Naive thymus-derived CD4-positive, alpha-beta T cell (primary cell): ENCODE measurements at regions of chr18 and their contacts with region 1.

Region 1: DNA sequence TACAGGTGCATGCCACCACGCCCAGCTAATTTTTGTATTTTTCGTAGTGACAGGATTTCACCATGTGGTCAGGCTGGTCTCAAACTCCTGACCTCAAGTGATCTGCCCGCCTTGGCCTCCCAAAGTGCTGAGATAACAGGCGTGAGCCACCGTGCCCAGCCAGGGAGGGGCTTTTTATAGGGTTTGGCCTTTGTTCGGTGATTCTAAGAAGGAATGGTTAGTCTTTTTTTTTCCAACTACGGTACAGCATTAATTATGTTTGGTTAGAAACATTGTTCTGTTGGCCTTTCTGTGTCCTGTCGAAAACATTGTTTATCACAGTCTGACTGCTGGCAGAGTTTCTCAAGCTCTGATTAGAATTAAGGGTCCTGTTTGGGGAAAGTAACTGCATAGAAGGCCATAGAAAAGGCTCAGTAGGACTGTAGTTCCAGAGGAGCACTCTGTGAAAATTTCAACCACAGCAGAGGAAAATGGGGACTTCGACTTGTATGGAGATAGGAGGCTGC is 19.3 kb upstream of the SMCHD1 start:
- DNase-seq: no peak
- ATAC-seq: peak; percentile 47
- H3K4me3 ChIP-seq: peak overlapping the region; percentile 46
- H3K4me3 Mint-ChIP-seq: peak overlapping the region in 9 of 10 donors; percentile 68 to 93 (median 86)
- H3K27ac ChIP-seq: peak overlapping the region; percentile 83
- H3K27ac Mint-ChIP-seq: peak overlapping the region in 6 of 9 donors; percentile 98 to 100 (median 100)
- H3K4me1 ChIP-seq: peaks cover 65 to 74% of the 10 kb centered on the region in 2 donors
- H3K4me1 Mint-ChIP-seq: peaks cover 0 to 100% (median 79%) of the 10 kb centered on the region in 7 donors
- H3K27me3 ChIP-seq: no peaks in the 10 kb centered on the region
- H3K27me3 Mint-ChIP-seq: no peaks in the 10 kb centered on the region

Region 2: GRCh38 chr18:2547477-2548087 is 88.6 kb before region 1 on chr18:
- CTCF ChIA-PET with region 1: interaction called, 5 read pairs
- POLR2A ChIA-PET with region 1: interaction called, 15 read pairs
- intact Hi-C with region 1: loop called in 1 of 2 experiments (anchors 1 kb)
- DNase-seq: peak in 7 of 9 donors; percentile 13 to 50 (median 37)
- ATAC-seq: peak; percentile 72
- H3K4me3 ChIP-seq: no peak overlapping the region
- H3K4me3 Mint-ChIP-seq: no peak overlapping the region
- H3K27ac ChIP-seq: no peak overlapping the region
- H3K27ac Mint-ChIP-seq: peak overlapping the region in 3 of 9 donors; percentile 0 to 10 (median 6)
- H3K4me1 ChIP-seq: no peaks in the 10 kb centered on the region
- H3K4me1 Mint-ChIP-seq: peaks cover 3 to 33% (median 23%) of the 10 kb centered on the region in 7 donors
- H3K27me3 ChIP-seq: no peaks in the 10 kb centered on the region
- H3K27me3 Mint-ChIP-seq: no peaks in the 10 kb centered on the region

Region 3: GRCh38 chr18:2589345-2590068 is 46.7 kb before region 1 on chr18:
- CTCF ChIA-PET with region 1: interaction called, 11 read pairs
- POLR2A ChIA-PET with region 1: interaction called, 74 read pairs
- intact Hi-C with region 1: loop called (anchors 1 kb)
- DNase-seq: peak in 5 of 9 donors; percentile 24 to 58 (median 49)
- ATAC-seq: peak; percentile 70
- H3K4me3 ChIP-seq: peak overlapping the region; percentile 44
- H3K4me3 Mint-ChIP-seq: peak overlapping the region in 9 of 10 donors; percentile 65 to 93 (median 80)
- H3K27ac ChIP-seq: peak overlapping the region; percentile 78
- H3K27ac Mint-ChIP-seq: peak overlapping the region; percentile 85 to 96 (median 92)
- H3K4me1 ChIP-seq: peaks cover 31 to 48% of the 10 kb centered on the region in 2 donors
- H3K4me1 Mint-ChIP-seq: peaks cover 12 to 66% (median 60%) of the 10 kb centered on the region in 7 donors
- H3K27me3 ChIP-seq: no peaks in the 10 kb centered on the region
- H3K27me3 Mint-ChIP-seq: no peaks in the 10 kb centered on the region

Region 4: GRCh38 chr18:2606335-2606734 is 29.8 kb before region 1 on chr18:
- CTCF ChIA-PET with region 1: interaction called, 22 read pairs
- POLR2A ChIA-PET with region 1: interaction called, 261 read pairs
- intact Hi-C with region 1: loop called (anchors 1 kb)
- DNase-seq: peak in 6 of 9 donors; percentile 42 to 65 (median 53)
- ATAC-seq: peak; percentile 73
- H3K4me3 ChIP-seq: no peak overlapping the region
- H3K4me3 Mint-ChIP-seq: peak overlapping the region; percentile 16 to 84 (median 70)
- H3K27ac ChIP-seq: peak overlapping the region; percentile 73
- H3K27ac Mint-ChIP-seq: peak overlapping the region; percentile 79 to 94 (median 87)
- H3K4me1 ChIP-seq: peaks cover 28 to 35% of the 10 kb centered on the region in 2 donors
- H3K4me1 Mint-ChIP-seq: peaks cover 22 to 79% (median 64%) of the 10 kb centered on the region in 7 donors
- H3K27me3 ChIP-seq: no peaks in the 10 kb centered on the region
- H3K27me3 Mint-ChIP-seq: no peaks in the 10 kb centered on the region

Region 5: GRCh38 chr18:2662990-2663389 is 26.8 kb after region 1 on chr18:
- CTCF ChIA-PET with region 1: interaction called, 3 read pairs
- POLR2A ChIA-PET with region 1: interaction called, 424 read pairs
- intact Hi-C with region 1: no loop called
- DNase-seq: no peak
- ATAC-seq: peak; percentile 38
- H3K4me3 ChIP-seq: no peak overlapping the region
- H3K4me3 Mint-ChIP-seq: peak overlapping the region; percentile 33 to 86 (median 68)
- H3K27ac ChIP-seq: no peak overlapping the region
- H3K27ac Mint-ChIP-seq: peak overlapping the region in 7 of 9 donors; percentile 34 to 83 (median 44)
- H3K4me1 ChIP-seq: peaks cover 34 to 44% of the 10 kb centered on the region in 2 donors
- H3K4me1 Mint-ChIP-seq: peaks cover 54 to 88% (median 81%) of the 10 kb centered on the region in 7 donors
- H3K27me3 ChIP-seq: no peaks in the 10 kb centered on the region
- H3K27me3 Mint-ChIP-seq: no peaks in the 10 kb centered on the region

Region 6: GRCh38 chr18:2680216-2680792 is 44.1 kb after region 1 on chr18:
- CTCF ChIA-PET with region 1: no interaction called
- POLR2A ChIA-PET with region 1: interaction called, 15 read pairs
- intact Hi-C with region 1: no loop called
- DNase-seq: no peak
- ATAC-seq: no peak
- H3K4me3 ChIP-seq: no peak overlapping the region
- H3K4me3 Mint-ChIP-seq: peak overlapping the region in 4 of 10 donors; percentile 7 to 55 (median 36)
- H3K27ac ChIP-seq: no peak overlapping the region
- H3K27ac Mint-ChIP-seq: peak overlapping the region in 8 of 9 donors; percentile 13 to 75 (median 63)
- H3K4me1 ChIP-seq: peaks cover 22 to 23% of the 10 kb centered on the region in 2 donors
- H3K4me1 Mint-ChIP-seq: peaks cover 40 to 89% (median 77%) of the 10 kb centered on the region in 7 donors
- H3K27me3 ChIP-seq: no peaks in the 10 kb centered on the region
- H3K27me3 Mint-ChIP-seq: no peaks in the 10 kb centered on the region

Region 7: GRCh38 chr18:2971741-2972552 is 335.8 kb after region 1 on chr18:
- CTCF ChIA-PET with region 1: no interaction called
- POLR2A ChIA-PET with region 1: interaction called, 4 read pairs
- intact Hi-C with region 1: loop called in 1 of 2 experiments (anchors 5 kb)
- DNase-seq: peak in 7 of 9 donors; percentile 40 to 80 (median 62)
- ATAC-seq: peak; percentile 84
- H3K4me3 ChIP-seq: peak overlapping the region; percentile 45
- H3K4me3 Mint-ChIP-seq: peak overlapping the region; percentile 75 to 93 (median 88)
- H3K27ac ChIP-seq: peak overlapping the region; percentile 76
- H3K27ac Mint-ChIP-seq: peak overlapping the region; percentile 90 to 99 (median 96)
- H3K4me1 ChIP-seq: peaks cover 75 to 82% of the 10 kb centered on the region in 2 donors
- H3K4me1 Mint-ChIP-seq: peaks cover 63 to 97% (median 93%) of the 10 kb centered on the region in 7 donors
- H3K27me3 ChIP-seq: no peaks in the 10 kb centered on the region
- H3K27me3 Mint-ChIP-seq: no peaks in the 10 kb centered on the region